ENCODE measurements at regions of chr3 and their contacts with region 1.

Region 1: DNA sequence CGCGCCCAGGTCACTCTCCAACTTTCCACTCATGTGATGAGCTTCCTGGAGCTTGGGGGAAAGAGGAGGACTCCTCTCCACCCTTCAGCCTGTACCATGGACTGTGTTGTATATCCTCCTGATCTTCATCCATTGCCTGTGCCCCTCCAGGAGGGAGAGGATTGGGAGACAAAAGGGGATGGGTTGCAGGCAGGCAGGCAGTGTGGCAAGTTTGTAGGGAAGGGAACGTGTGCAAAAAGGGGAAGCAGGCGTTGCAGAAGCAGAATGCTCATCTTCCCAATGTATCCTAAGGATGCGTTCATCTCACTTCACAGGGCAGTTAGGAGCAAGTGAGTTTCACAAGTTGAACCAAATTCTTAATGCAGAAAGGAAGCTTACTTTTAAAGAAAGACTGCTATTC is 28.1 kb upstream of the GHSR start:
- DNase-seq: no peak
- ATAC-seq: peak in 3 of 8 donors; percentile 8 to 50 (median 11)
- H3K4me3 ChIP-seq: peak overlapping the region in 9 of 10 donors; percentile 2 to 59 (median 48)
- H3K27ac ChIP-seq: peak overlapping the region in 4 of 10 donors; percentile 17 to 73 (median 63)
- H3K4me1 ChIP-seq: peaks cover 0 to 19% (median 4%) of the 10 kb centered on the region in 9 donors
- H3K27me3 ChIP-seq: no peaks in the 10 kb centered on the region
- CTCF ChIP-seq: no peak

Region 2: DNA sequence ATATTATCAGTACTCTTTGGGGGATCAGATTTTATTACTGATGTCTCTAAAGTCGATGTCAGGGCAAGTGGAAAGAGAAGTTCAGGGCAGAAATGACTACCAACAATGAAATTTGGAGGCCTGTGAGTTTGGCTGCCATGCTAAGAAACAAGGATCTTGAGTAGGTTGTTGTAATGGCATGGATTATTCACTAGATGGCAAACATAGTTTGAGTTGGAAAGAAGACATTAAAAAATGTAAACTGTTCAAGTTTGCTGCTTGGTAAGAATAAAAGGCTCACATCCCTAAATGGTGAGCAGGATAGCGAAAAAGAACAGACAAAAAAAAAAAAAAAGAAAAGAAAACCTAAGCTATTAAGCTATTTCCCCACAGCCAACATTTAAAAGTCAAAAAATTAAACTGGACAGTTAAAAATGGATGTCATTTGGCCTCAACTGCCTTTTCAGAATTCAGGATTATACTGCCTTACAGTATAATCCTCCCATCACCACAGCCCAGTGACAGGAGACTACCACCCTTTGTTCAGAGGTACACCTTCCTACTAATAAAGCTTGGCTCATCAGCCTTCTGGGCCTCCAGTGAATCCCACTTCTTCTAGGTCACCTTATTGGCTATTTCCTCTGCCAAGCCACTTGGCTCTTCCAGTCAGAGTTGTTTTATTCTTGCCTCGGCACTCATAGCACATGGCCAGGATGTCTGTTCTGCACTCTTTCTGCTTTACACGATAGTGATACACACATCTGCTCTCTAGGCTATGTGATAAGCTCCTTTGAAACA is 829.8 kb before region 1 on chr3:
- intact Hi-C with region 1: loop called in 2 of 10 experiments (anchors 10 kb)
- DNase-seq: peak in 1 of 2 donors; percentile 57
- ATAC-seq: peak; percentile 57 to 88 (median 80)
- H3K4me3 ChIP-seq: no peak overlapping the region
- H3K27ac ChIP-seq: peak overlapping the region in 9 of 10 donors; percentile 37 to 82 (median 66)
- H3K4me1 ChIP-seq: peaks cover 0 to 65% (median 29%) of the 10 kb centered on the region in 9 donors
- H3K27me3 ChIP-seq: no peaks in the 10 kb centered on the region
- CTCF ChIP-seq: peak; percentile 40 to 76 (median 65)

Region 3: DNA sequence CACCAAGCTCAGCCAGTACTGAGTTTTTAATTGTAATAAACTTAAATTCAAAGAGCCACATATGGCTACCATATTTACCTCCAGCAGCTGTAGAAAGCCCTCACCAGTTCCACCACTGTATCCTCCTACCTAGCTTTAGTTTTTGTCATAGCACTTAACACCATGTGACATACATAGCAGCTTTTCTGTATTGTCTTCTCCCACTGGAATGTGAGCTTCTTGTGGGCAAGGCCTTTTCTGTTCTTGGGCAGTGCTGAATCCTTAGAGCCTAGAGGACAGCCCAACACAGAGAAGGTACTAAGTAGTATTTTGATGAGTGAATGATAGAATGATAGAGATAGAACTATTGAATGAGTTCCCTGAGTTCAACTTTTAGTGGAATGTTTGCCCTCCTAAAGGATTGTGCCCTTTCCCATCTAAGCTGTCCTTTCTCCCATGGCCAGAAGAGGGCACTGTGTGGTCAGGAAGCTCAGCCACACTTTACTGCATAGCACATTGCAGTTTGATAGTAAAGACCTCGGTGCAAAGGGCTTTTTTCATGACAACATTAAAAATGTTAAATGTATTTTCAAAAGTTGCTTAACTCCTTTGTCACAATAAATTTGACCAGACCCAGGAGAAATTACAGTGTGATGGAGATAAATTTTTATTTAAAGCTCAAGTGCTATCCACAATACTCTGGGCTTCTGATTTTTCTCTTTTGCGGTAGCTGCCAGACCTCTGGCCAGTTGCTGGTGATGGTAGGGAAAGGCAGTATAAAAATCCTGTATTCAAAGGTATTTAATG is 143.9 kb before region 1 on chr3:
- intact Hi-C with region 1: loop called in 1 of 10 experiments (anchors 2 kb)
- DNase-seq: peak in 1 of 2 donors; percentile 75
- ATAC-seq: peak; percentile 80 to 91 (median 88)
- H3K4me3 ChIP-seq: no peak overlapping the region
- H3K27ac ChIP-seq: peak overlapping the region in 6 of 10 donors; percentile 22 to 62 (median 40)
- H3K4me1 ChIP-seq: peaks cover 0 to 17% (median 6%) of the 10 kb centered on the region in 9 donors
- H3K27me3 ChIP-seq: no peaks in the 10 kb centered on the region
- CTCF ChIP-seq: peak; percentile 69 to 95 (median 91)

Region 4: DNA sequence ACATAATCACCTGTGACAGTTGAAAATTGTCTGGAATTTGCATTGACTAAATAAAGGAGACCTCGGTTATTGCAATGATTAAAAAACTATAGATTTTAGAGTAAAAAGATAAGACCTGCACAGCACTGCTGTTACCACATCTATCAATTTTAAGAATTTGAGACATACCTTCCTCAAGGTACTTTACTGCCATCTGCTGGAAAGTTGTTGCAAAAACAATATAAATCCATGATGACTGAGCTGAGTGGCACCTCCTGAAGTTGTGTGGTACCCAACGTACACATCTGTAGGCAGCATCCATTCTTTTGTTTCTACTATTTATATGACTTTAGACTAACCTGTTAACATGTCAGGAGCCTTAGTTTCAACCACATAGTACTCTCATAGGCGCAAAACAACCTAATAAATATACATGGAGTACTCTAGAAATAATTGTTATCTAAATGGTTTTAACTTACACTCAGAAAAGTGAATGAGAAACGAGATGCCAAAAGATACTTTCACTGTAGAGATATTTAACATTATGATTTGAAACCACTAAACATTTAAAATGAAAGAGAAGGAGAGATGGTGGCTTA is 134.8 kb before region 1 on chr3:
- intact Hi-C with region 1: loop called in 1 of 10 experiments (anchors 10 kb)
- DNase-seq: no peak
- ATAC-seq: peak; percentile 54 to 78 (median 68)
- H3K4me3 ChIP-seq: no peak overlapping the region
- H3K27ac ChIP-seq: peak overlapping the region in 1 of 10 donors; percentile 26
- H3K4me1 ChIP-seq: no peaks in the 10 kb centered on the region
- H3K27me3 ChIP-seq: no peaks in the 10 kb centered on the region
- CTCF ChIP-seq: peak; percentile 50 to 85 (median 75)

Region 5: GRCh38 chr3:172355839-172356238 is 120.5 kb before region 1 on chr3:
- intact Hi-C with region 1: loop called in 2 of 10 experiments (anchors 10 kb)
- DNase-seq: no peak
- ATAC-seq: peak in 6 of 8 donors; percentile 45 to 75 (median 62)
- H3K4me3 ChIP-seq: no peak overlapping the region
- H3K27ac ChIP-seq: peak overlapping the region in 2 of 10 donors; percentile 12 to 22
- H3K4me1 ChIP-seq: peaks cover 0 to 44% (median 28%) of the 10 kb centered on the region in 9 donors
- H3K27me3 ChIP-seq: no peaks in the 10 kb centered on the region
- CTCF ChIP-seq: no peak

Region 6: GRCh38 chr3:172367205-172368105 is 108.9 kb before region 1 on chr3:
- intact Hi-C with region 1: loop called in 1 of 10 experiments (anchors 10 kb)
- DNase-seq: no peak
- ATAC-seq: peak in 1 of 8 donors; percentile 9
- H3K4me3 ChIP-seq: no peak overlapping the region
- H3K27ac ChIP-seq: peak overlapping the region in 4 of 10 donors; percentile 6 to 24 (median 12)
- H3K4me1 ChIP-seq: peaks cover 0 to 28% (median 10%) of the 10 kb centered on the region in 9 donors
- H3K27me3 ChIP-seq: no peaks in the 10 kb centered on the region
- CTCF ChIP-seq: no peak

Region 7: GRCh38 chr3:172595641-172596393 is 119.5 kb after region 1 on chr3:
- intact Hi-C with region 1: loop called in 1 of 10 experiments (anchors 10 kb)
- DNase-seq: peak in 1 of 2 donors; percentile 54
- ATAC-seq: peak in 7 of 8 donors; percentile 66 to 78 (median 74)
- H3K4me3 ChIP-seq: peak overlapping the region in 8 of 10 donors; percentile 3 to 43 (median 37)
- H3K27ac ChIP-seq: peak overlapping the region; percentile 70 to 95 (median 84)
- H3K4me1 ChIP-seq: peaks cover 3 to 56% (median 21%) of the 10 kb centered on the region in 9 donors
- H3K27me3 ChIP-seq: no peaks in the 10 kb centered on the region
- CTCF ChIP-seq: peak; percentile 60 to 88 (median 80)

Region 8: GRCh38 chr3:172643506-172644179 is 167.3 kb after region 1 on chr3:
- intact Hi-C with region 1: no loop called
- DNase-seq: no peak
- ATAC-seq: peak in 1 of 8 donors; percentile 21
- H3K4me3 ChIP-seq: no peak overlapping the region
- H3K27ac ChIP-seq: no peak overlapping the region
- H3K4me1 ChIP-seq: peaks cover 0 to 33% (median 15%) of the 10 kb centered on the region in 9 donors
- H3K27me3 ChIP-seq: no peaks in the 10 kb centered on the region
- CTCF ChIP-seq: no peak